HepG2 (cell line): ENCODE measurements at regions of chr14 and their contacts with region 1.

Region 1: DNA sequence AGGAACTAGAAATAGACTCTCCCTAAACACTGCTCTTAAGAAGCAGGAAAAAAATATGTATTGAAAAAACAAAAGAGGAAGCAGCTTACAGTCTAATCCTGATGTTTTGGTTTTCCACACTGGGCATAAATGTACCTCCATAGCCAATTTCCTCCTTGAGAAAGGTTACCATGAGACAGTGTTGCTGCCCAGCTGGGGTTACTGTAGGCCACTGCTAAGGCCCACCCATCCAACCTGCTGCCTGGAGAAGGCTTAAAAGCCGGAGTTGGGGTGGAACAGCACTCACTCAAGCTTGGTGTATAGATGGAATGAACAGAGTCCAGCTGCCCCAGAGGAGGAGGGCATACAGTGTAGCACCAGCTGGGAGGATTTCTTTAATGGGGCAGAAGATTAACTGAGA is 41.1 kb downstream of the ERG28 start:
- DNase-seq: no peak
- ATAC-seq: no peak
- H3K4me3 ChIP-seq: no peak overlapping the region
- H3K27ac ChIP-seq: no peak overlapping the region
- H3K4me1 ChIP-seq: peaks cover 41% of the 10 kb centered on the region
- H3K27me3 ChIP-seq: no peaks in the 10 kb centered on the region
- CTCF ChIP-seq: no peak
- EP300 ChIP-seq: no peak
- POLR2A ChIP-seq: no peak
- RAD21 ChIP-seq: no peak

Region 2: DNA sequence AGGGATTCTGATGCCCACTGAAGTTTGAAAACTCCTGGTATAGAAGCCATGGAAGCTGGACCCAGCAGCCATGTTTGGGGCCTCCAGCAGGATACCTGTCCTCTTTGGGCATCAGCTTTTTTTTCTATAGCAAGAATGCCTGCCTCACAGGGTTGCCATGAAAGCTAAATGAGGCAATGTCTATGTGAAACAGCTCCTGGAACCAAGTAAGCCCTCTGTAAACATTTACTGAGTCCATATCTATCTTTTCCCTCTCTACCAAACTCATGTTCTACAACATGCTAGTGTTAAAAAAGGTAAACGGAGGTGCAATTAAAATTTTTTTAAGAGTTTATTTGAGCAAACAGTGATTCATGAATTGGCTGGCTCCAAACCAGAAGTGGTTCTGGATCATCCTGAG is 12.5 kb before region 1 on chr14:
- CTCF ChIA-PET with region 1: no interaction called
- POLR2A ChIA-PET with region 1: interaction called, 4 read pairs
- in situ Hi-C with region 1: no loop called
- intact Hi-C with region 1: loop called (anchors 1 kb)
- DNase-seq: peak; percentile 52
- ATAC-seq: no peak
- H3K4me3 ChIP-seq: no peak overlapping the region
- H3K27ac ChIP-seq: no peak overlapping the region
- H3K4me1 ChIP-seq: peaks cover 76% of the 10 kb centered on the region
- H3K27me3 ChIP-seq: no peaks in the 10 kb centered on the region
- CTCF ChIP-seq: no peak
- EP300 ChIP-seq: no peak
- POLR2A ChIP-seq: no peak
- RAD21 ChIP-seq: no peak

Region 3: GRCh38 chr14:75667099-75667765 is 47.7 kb after region 1 on chr14:
- CTCF ChIA-PET with region 1: no interaction called
- POLR2A ChIA-PET with region 1: no interaction called
- in situ Hi-C with region 1: no loop called
- intact Hi-C with region 1: no loop called
- DNase-seq: no peak
- ATAC-seq: no peak
- H3K4me3 ChIP-seq: no peak overlapping the region
- H3K27ac ChIP-seq: no peak overlapping the region
- H3K4me1 ChIP-seq: peaks cover 8% of the 10 kb centered on the region
- H3K27me3 ChIP-seq: no peaks in the 10 kb centered on the region
- CTCF ChIP-seq: no peak
- EP300 ChIP-seq: no peak
- POLR2A ChIP-seq: no peak
- RAD21 ChIP-seq: no peak